ENCODE measurements at regions of chr6 and their contacts with region 1.

Region 1: DNA sequence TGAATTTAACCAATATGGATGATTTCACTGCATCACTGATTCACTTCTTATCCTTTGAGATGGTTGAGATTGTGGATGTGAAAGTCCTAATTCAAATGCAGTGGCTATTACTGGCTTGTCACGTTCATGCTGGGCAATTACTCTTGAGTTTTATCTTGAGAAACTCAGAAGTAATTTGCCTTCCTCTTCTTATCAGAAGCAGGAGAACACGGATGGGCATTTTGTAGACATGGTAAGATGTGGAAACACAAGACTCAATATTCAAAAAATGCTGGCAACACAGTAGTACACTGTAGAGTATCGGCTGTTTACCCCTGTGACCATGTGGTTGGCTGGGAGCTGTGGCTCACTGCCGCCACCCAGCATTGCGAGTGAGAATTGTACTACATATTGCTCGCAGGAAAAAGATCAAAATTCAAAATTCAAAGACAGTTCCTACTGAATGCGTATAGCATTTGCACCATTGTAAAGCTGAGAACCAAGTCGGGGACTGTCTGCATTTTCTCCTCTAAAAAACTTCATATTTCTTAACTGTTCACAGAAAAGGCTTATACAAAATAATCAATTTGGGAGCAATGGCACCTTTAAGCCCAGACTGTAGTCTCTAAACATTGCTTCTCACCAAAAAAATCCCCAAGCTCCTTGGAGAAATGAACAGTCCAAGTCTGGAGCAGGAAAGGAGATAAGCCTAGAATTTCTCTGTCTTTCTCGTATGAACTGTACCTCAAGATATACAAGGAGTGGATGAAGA is 61.9 kb upstream of the ELOVL5 start:
- DNase-seq: peak; percentile 21 to 72 (median 63)
- ATAC-seq: peak; percentile 98
- H3K4me3 ChIP-seq: no peak overlapping the region
- H3K4me3 Mint-ChIP-seq: no peak overlapping the region
- H3K27ac ChIP-seq: no peak overlapping the region
- H3K27ac Mint-ChIP-seq: peak overlapping the region in 1 of 9 donors; percentile 22
- H3K4me1 ChIP-seq: peaks cover 0 to 3% of the 10 kb centered on the region in 2 donors
- H3K4me1 Mint-ChIP-seq: peaks cover 0 to 6% (median 3%) of the 10 kb centered on the region in 7 donors
- H3K27me3 ChIP-seq: no peaks in the 10 kb centered on the region
- H3K27me3 Mint-ChIP-seq: peaks cover 0 to 5% (median 0%) of the 10 kb centered on the region in 5 donors

Region 2: DNA sequence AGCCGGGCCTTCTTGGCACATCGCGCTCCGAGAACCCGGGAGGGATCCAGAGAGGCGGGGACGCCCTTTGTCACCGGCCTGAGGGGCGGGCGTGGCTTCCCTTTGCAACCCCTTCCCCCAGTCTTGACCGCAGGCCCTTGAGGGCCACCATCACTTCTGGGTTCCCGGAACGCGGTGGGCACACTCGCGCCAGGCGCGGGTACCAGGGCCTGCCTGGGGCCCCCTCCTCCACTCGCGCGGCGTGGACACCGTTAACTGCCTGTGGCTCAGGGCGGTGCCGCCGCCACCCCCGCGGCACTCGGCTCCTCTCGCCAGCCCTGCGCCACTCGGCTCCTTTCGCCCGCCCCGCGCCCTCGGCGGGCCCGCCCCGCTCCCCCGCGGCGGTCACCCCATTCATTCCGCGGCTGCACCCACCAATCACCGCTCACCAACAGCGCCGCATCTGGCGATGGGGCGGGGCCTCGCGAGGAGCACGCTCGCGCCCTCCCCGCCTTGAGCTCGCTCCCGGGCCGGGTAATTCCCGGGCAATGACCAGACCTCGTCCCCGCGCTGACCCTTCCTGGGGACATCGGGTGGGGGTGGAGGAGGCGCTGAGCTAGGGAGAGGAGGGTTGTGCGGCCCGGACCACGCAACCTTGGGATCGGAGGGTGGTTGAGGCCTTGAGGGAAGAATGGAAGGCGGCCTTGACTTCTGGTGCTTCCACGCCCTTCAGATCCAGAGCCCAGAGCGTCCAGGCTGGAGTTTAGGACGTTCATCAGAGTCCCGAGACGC is 51.4 kb before region 1 on chr6:
- CTCF ChIA-PET with region 1: interaction called, 5 read pairs
- POLR2A ChIA-PET with region 1: no interaction called
- intact Hi-C with region 1: loop called in 1 of 2 experiments (anchors 1 kb)
- DNase-seq: peak; percentile 79 to 96 (median 89)
- ATAC-seq: peak; percentile 91
- H3K4me3 ChIP-seq: peak overlapping the region; percentile 76
- H3K4me3 Mint-ChIP-seq: peak overlapping the region; percentile 78 to 94 (median 90)
- H3K27ac ChIP-seq: peak overlapping the region; percentile 88
- H3K27ac Mint-ChIP-seq: peak overlapping the region; percentile 87 to 99 (median 98)
- H3K4me1 ChIP-seq: peaks cover 33 to 41% of the 10 kb centered on the region in 2 donors
- H3K4me1 Mint-ChIP-seq: peaks cover 24 to 54% (median 43%) of the 10 kb centered on the region in 7 donors
- H3K27me3 ChIP-seq: no peaks in the 10 kb centered on the region
- H3K27me3 Mint-ChIP-seq: peaks cover 0 to 4% (median 0%) of the 10 kb centered on the region in 5 donors

Region 3: GRCh38 chr6:53437557-53438202 is 27.0 kb after region 1 on chr6:
- CTCF ChIA-PET with region 1: interaction called, 8 read pairs
- POLR2A ChIA-PET with region 1: no interaction called
- intact Hi-C with region 1: loop called in 1 of 2 experiments (anchors 1 kb)
- DNase-seq: peak in 5 of 9 donors; percentile 11 to 34 (median 31)
- ATAC-seq: peak; percentile 78
- H3K4me3 ChIP-seq: no peak overlapping the region
- H3K4me3 Mint-ChIP-seq: no peak overlapping the region
- H3K27ac ChIP-seq: no peak overlapping the region
- H3K27ac Mint-ChIP-seq: no peak overlapping the region
- H3K4me1 ChIP-seq: no peaks in the 10 kb centered on the region
- H3K4me1 Mint-ChIP-seq: peaks cover 0 to 6% (median 0%) of the 10 kb centered on the region in 7 donors
- H3K27me3 ChIP-seq: no peaks in the 10 kb centered on the region
- H3K27me3 Mint-ChIP-seq: peaks cover 0 to 9% (median 3%) of the 10 kb centered on the region in 5 donors

Region 4: GRCh38 chr6:53524455-53524815 is 113.8 kb after region 1 on chr6:
- CTCF ChIA-PET with region 1: no interaction called
- POLR2A ChIA-PET with region 1: no interaction called
- intact Hi-C with region 1: no loop called
- DNase-seq: no peak
- ATAC-seq: no peak
- H3K4me3 ChIP-seq: no peak overlapping the region
- H3K4me3 Mint-ChIP-seq: no peak overlapping the region
- H3K27ac ChIP-seq: no peak overlapping the region
- H3K27ac Mint-ChIP-seq: no peak overlapping the region
- H3K4me1 ChIP-seq: no peaks in the 10 kb centered on the region
- H3K4me1 Mint-ChIP-seq: peaks cover 0 to 11% (median 4%) of the 10 kb centered on the region in 7 donors
- H3K27me3 ChIP-seq: no peaks in the 10 kb centered on the region
- H3K27me3 Mint-ChIP-seq: no peaks in the 10 kb centered on the region